Endothelial cell of umbilical vein (primary cell): ENCODE measurements at regions of chr4 and their contacts with region 1.

Region 1: DNA sequence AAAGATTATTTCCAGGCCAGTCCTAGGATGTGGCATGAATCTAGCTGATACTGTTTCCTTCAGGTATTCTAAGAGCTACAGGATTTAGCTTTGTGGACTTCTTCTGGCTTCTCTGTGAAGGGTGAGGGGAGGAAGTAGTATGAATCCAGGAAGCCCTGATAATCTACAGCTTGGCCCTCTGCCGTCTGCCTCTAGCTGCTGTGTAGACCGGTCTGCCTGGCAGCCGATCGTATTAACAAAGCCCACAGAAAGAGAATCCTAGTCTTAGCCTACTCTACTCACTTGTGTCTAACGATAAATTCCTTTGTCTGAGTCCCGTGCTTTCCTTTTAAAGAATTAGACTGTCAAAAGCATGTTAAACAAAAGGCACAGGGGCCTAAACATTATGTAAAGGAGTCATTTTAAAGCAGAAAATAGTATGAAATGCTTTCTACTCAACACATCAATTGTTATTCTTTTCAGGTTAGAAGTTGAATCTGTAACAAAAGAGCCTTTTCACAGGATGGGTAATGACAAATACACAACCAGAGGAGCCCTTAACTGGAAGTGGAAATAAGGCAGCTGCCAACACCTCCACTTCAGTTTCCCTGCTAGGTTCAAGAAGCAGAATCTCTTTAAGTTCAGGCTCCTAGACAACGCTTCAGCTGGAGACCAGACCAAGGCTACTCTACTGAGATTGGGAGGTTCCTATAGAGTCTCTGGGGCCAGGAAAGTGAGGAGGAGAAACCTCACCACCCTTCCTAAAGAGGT is 48.9 kb upstream of the UCP1 start:
- DNase-seq: peak; percentile 10
- H3K4me3 ChIP-seq: no peak overlapping the region
- H3K27ac ChIP-seq: no peak overlapping the region
- H3K4me1 ChIP-seq: no peaks in the 10 kb centered on the region
- H3K27me3 ChIP-seq: peaks cover 0 to 4% of the 10 kb centered on the region in 2 experiments
- CTCF ChIP-seq: no peak
- POLR2A ChIP-seq: no peak

Region 2: GRCh38 chr4:140367738-140368137 is 249.9 kb before region 1 on chr4:
- CTCF ChIA-PET with region 1: no interaction called
- POLR2A ChIA-PET with region 1: no interaction called
- dilution Hi-C with region 1: no loop called
- intact Hi-C with region 1: loop called (anchors 2 kb)
- DNase-seq: peak; percentile 55
- H3K4me3 ChIP-seq: no peak overlapping the region
- H3K27ac ChIP-seq: peak overlapping the region; percentile 30
- H3K4me1 ChIP-seq: peaks cover 11% of the 10 kb centered on the region
- H3K27me3 ChIP-seq: no peaks in the 10 kb centered on the region
- CTCF ChIP-seq: no peak
- POLR2A ChIP-seq: no peak

Region 3: DNA sequence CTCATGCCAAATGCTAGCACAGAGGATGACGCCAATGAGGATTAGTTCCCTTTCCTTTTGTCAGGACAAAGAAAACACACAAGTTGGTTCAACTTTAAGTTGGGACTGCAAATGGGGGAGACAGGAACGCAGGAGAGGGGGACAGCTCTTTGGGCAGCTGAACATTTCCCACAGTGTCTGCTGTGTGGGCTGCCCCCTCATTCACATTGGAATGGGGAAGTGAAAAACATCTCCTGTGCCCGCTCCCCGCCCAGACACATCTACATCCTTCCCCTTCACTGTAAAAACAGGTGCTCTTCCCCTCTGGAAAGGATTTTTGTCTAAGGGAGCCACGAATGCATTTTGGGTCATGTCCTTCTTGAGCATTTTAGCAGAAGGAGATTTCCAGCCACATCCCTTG is 183.0 kb after region 1 on chr4:
- CTCF ChIA-PET with region 1: no interaction called
- POLR2A ChIA-PET with region 1: no interaction called
- dilution Hi-C with region 1: no loop called
- intact Hi-C with region 1: no loop called
- DNase-seq: no peak
- H3K4me3 ChIP-seq: no peak overlapping the region
- H3K27ac ChIP-seq: no peak overlapping the region
- H3K4me1 ChIP-seq: no peaks in the 10 kb centered on the region
- H3K27me3 ChIP-seq: peaks cover 2 to 4% of the 10 kb centered on the region in 2 experiments
- CTCF ChIP-seq: no peak
- POLR2A ChIP-seq: no peak

Region 4: GRCh38 chr4:141090473-141090872 is 472.8 kb after region 1 on chr4:
- CTCF ChIA-PET with region 1: no interaction called
- POLR2A ChIA-PET with region 1: no interaction called
- dilution Hi-C with region 1: no loop called
- intact Hi-C with region 1: no loop called
- DNase-seq: no peak
- H3K4me3 ChIP-seq: no peak overlapping the region
- H3K27ac ChIP-seq: no peak overlapping the region
- H3K4me1 ChIP-seq: no peaks in the 10 kb centered on the region
- H3K27me3 ChIP-seq: no peaks in the 10 kb centered on the region
- CTCF ChIP-seq: no peak
- POLR2A ChIP-seq: no peak

Region 5: GRCh38 chr4:141158219-141158618 is 540.5 kb after region 1 on chr4:
- CTCF ChIA-PET with region 1: no interaction called
- POLR2A ChIA-PET with region 1: no interaction called
- dilution Hi-C with region 1: no loop called
- intact Hi-C with region 1: no loop called
- DNase-seq: peak; percentile 37
- H3K4me3 ChIP-seq: no peak overlapping the region
- H3K27ac ChIP-seq: no peak overlapping the region
- H3K4me1 ChIP-seq: no peaks in the 10 kb centered on the region
- H3K27me3 ChIP-seq: peaks cover under 1 to 3% of the 10 kb centered on the region in 2 experiments
- CTCF ChIP-seq: peak in 1 of 2 donors; percentile 28
- POLR2A ChIP-seq: no peak